Sigmoid colon (tissue), 7 donors: ENCODE measurements at regions of chr14 and their contacts with region 1.

Region 1: GRCh38 chr14:74569806-74570591 is 42.0 kb downstream of the LTBP2 start:
- DNase-seq: no peak
- H3K4me3 ChIP-seq: no peak overlapping the region
- H3K27ac ChIP-seq: peak overlapping the region in 2 of 4 donors; percentile 80 to 86
- H3K4me1 ChIP-seq: peaks cover 0 to 57% (median 32%) of the 10 kb centered on the region in 4 donors
- H3K27me3 ChIP-seq: no peaks in the 10 kb centered on the region
- CTCF ChIP-seq: no peak
- EP300 ChIP-seq: no peak
- POLR2A ChIP-seq: no peak

Region 2: DNA sequence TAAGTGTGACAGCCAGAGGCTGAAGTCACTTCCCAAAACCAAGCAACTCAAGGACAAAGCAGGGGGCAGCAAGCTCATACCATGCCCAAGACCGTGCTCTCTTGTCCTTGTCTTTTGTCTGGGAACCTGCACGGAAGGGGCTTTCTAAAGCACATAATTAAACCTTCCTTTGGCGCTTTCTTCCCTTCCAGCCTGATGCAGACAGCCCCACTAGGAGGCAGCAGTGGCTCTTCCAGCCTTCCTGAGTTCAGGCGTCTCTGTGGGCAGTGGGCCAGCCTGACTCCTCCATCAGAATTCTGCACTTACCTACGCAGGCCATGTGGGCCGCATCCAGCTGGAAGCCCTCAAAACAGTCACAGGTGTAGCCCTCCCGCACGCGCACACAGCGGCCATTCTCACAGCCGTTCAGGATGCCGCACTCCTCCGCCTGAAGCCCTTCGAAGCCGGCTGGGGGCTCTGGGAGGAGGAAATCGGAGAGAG is 68.8 kb before region 1 on chr14:
- intact Hi-C with region 1: loop called (anchors 5 kb)
- DNase-seq: peak; percentile 92
- H3K4me3 ChIP-seq: no peak overlapping the region
- H3K27ac ChIP-seq: peak overlapping the region in 1 of 4 donors; percentile 5
- H3K4me1 ChIP-seq: peaks cover 0 to 4% (median 0%) of the 10 kb centered on the region in 4 donors
- H3K27me3 ChIP-seq: no peaks in the 10 kb centered on the region
- CTCF ChIP-seq: peak; percentile 20 to 61 (median 46)
- EP300 ChIP-seq: no peak
- POLR2A ChIP-seq: no peak

Region 3: DNA sequence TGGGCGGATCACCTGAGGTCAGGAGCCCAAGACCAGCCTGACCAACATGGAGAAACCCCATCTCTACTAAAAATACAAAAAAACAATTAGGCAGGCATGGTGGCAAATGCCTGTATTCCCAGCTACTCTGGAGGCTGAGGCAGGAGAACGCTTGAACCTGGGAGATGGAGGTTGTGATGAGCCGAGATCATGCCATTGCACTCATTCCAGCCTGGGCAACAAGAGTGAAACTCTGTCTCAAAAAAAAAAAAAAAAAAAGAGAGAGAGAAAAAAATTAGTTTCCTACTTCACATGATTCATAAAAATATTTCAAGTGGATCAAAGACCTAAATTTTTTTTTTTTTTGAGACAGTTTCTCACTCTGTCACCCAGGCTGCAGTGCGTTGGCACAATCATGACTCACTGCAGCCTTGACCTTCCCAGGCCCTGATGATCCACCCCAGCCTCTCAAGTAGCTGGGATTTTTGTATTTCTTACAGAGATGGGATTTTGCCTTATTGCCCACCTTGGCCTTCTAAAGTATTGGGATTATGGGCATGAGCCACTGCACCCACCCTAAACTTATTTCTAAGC is 167.8 kb after region 1 on chr14:
- intact Hi-C with region 1: no loop called
- DNase-seq: no peak
- H3K4me3 ChIP-seq: no peak overlapping the region
- H3K27ac ChIP-seq: no peak overlapping the region
- H3K4me1 ChIP-seq: no peaks in the 10 kb centered on the region
- H3K27me3 ChIP-seq: no peaks in the 10 kb centered on the region
- CTCF ChIP-seq: no peak
- EP300 ChIP-seq: no peak
- POLR2A ChIP-seq: no peak